ENCODE measurements at regions of chr22 and their contacts with region 1.

Region 1: DNA sequence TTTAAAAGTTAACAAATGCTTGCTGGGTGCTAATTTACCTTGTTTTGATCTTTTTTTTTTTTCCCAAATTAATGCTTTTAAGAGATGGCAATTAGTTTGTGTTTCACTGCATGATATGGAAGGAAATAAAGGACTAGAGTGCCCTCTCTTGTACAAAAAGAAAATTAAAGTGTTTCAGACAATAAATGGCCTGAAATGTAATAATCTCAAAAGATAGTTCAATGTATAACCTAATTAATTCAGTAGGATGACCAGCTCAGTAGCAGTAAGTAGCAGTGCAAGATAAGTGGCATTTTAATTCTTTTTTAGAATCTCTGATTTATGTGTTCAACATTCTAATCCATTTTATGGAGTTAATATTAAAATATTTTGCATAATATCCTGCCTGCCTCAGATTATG is 39.9 kb upstream of the MYO18B start:
- DNase-seq: no peak
- H3K4me3 ChIP-seq: no peak overlapping the region
- H3K27ac ChIP-seq: no peak overlapping the region
- H3K4me1 ChIP-seq: peaks cover 0 to 6% (median 1%) of the 10 kb centered on the region in 4 donors
- H3K27me3 ChIP-seq: no peaks in the 10 kb centered on the region
- CTCF ChIP-seq: peak in 3 of 4 experiments; percentile 8 to 42 (median 26)
- EP300 ChIP-seq: no peak
- POLR2A ChIP-seq: no peak

Region 2: DNA sequence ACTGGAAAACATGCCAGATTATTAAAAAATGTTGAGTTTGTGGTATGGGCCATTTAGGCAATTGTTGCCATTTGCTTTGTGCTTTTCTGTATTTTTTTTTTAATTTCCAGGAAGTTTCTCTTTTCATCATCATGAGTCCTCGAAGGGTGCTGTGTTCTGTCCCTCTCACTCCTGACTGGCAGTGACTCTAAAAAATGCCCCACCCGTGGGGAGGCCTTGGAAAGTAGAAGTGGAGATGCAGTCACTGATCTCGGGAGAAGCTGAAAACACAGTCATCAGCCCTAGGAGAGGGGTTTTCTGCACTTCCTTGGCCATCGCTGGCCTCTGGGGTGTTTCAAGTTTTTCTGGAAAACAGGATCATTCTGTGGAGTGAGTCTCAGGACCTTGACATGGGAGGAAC is 236.1 kb before region 1 on chr22:
- intact Hi-C with region 1: loop called (anchors 1 kb)
- DNase-seq: no peak
- H3K4me3 ChIP-seq: no peak overlapping the region
- H3K27ac ChIP-seq: no peak overlapping the region
- H3K4me1 ChIP-seq: no peaks in the 10 kb centered on the region
- H3K27me3 ChIP-seq: no peaks in the 10 kb centered on the region
- CTCF ChIP-seq: no peak
- EP300 ChIP-seq: no peak
- POLR2A ChIP-seq: no peak

Region 3: GRCh38 chr22:25598609-25599008 is 103.4 kb before region 1 on chr22:
- intact Hi-C with region 1: no loop called
- DNase-seq: no peak
- H3K4me3 ChIP-seq: no peak overlapping the region
- H3K27ac ChIP-seq: no peak overlapping the region
- H3K4me1 ChIP-seq: no peaks in the 10 kb centered on the region
- H3K27me3 ChIP-seq: no peaks in the 10 kb centered on the region
- CTCF ChIP-seq: no peak
- EP300 ChIP-seq: no peak
- POLR2A ChIP-seq: no peak

Region 4: DNA sequence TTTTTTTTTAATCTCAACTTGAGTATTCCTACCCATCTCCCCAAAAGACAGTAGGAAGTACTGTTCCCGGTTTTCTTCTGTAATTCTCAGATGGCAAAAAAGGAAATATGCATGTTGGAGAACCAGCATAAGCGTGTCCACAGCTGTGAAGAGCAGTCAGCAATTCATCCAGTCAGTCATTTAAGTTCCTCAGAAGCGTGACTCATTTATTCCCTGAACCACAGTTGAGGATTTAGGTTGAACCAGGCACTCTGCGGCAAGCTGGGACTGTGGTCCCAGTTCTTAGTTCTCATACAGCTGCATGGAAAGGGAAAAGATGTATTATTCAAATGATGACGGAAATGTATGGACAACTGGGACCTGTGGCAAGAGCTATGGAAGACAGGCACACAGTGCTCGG is 21.1 kb before region 1 on chr22:
- intact Hi-C with region 1: no loop called
- DNase-seq: no peak
- H3K4me3 ChIP-seq: no peak overlapping the region
- H3K27ac ChIP-seq: no peak overlapping the region
- H3K4me1 ChIP-seq: peaks cover 0 to 3% (median 0%) of the 10 kb centered on the region in 4 donors
- H3K27me3 ChIP-seq: no peaks in the 10 kb centered on the region
- CTCF ChIP-seq: no peak
- EP300 ChIP-seq: no peak
- POLR2A ChIP-seq: no peak

Measured in sigmoid colon (tissue), 7 donors.